PC-9 (cell line): ENCODE measurements at regions of chr2 and their contacts with region 1.

Region 1: GRCh38 chr2:110101280-110101844 is 14.3 kb downstream of the MALL start:
- DNase-seq: peak; percentile 98 to 99
- H3K4me3 ChIP-seq: peak overlapping the region; percentile 25; the same call in 1 of the 2 replicates
- H3K27ac ChIP-seq: peak overlapping the region; percentile 100
- H3K4me1 ChIP-seq: peaks cover 92% of the 10 kb centered on the region
- H3K27me3 ChIP-seq: no peaks in the 10 kb centered on the region
- CTCF ChIP-seq: no peak

Region 2: GRCh38 chr2:110113961-110114591 is 12.7 kb after region 1 on chr2:
- CTCF ChIA-PET with region 1: interaction called, 6 read pairs
- POLR2A ChIA-PET with region 1: interaction called, 10 read pairs
- intact Hi-C with region 1: loop called (anchors 1 kb)
- DNase-seq: peak; percentile 70 to 83
- H3K4me3 ChIP-seq: peak overlapping the region; percentile 70
- H3K27ac ChIP-seq: peak overlapping the region; percentile 80
- H3K4me1 ChIP-seq: peaks cover 51% of the 10 kb centered on the region
- H3K27me3 ChIP-seq: no peaks in the 10 kb centered on the region
- CTCF ChIP-seq: peak; percentile 51; the same call in 1 of the 2 replicates

Region 3: GRCh38 chr2:110149330-110150220 is 48.2 kb after region 1 on chr2:
- CTCF ChIA-PET with region 1: no interaction called
- POLR2A ChIA-PET with region 1: no interaction called
- intact Hi-C with region 1: loop called (anchors 1 kb)
- DNase-seq: peak; percentile 34 to 92
- H3K4me3 ChIP-seq: peak overlapping the region; percentile 14; the same call in 1 of the 2 replicates
- H3K27ac ChIP-seq: peak overlapping the region; percentile 95
- H3K4me1 ChIP-seq: peaks cover 24% of the 10 kb centered on the region
- H3K27me3 ChIP-seq: no peaks in the 10 kb centered on the region
- CTCF ChIP-seq: no peak

Region 4: DNA sequence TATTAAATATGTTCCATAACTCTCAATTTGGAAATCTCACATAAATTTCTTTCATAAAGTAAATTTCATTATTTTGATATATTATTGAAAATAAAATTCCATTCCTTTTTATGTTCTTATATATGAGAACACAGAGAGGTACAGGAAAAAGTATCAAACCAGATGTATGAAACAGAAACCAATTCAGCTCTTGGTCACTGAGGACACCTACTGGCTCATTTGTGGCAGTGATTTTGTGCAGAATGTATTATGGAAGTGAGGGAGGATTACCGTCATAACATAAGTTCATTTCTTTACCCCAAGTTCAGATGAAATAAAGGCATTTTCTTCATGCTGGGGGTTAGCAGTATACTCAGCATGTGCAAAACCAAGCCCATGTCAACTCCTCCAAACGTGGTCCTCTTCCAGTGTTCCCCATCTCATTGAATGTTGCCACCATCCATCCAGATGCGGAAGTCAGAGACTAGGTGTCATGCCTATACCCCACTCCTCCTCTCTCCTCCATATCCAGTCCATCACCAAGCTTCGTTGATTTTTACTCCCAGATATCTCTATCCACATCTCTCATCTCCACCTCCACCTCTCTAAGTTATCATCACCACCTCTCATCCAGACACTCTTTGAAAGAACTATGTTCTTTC is 55.9 kb after region 1 on chr2:
- CTCF ChIA-PET with region 1: interaction called, 7 read pairs
- POLR2A ChIA-PET with region 1: no interaction called
- intact Hi-C with region 1: loop called (anchors 2 kb)
- DNase-seq: peak; percentile 31 to 58
- H3K4me3 ChIP-seq: no peak overlapping the region
- H3K27ac ChIP-seq: peak overlapping the region; percentile 65
- H3K4me1 ChIP-seq: peaks cover 10% of the 10 kb centered on the region
- H3K27me3 ChIP-seq: no peaks in the 10 kb centered on the region
- CTCF ChIP-seq: peak; percentile 88

Region 5: DNA sequence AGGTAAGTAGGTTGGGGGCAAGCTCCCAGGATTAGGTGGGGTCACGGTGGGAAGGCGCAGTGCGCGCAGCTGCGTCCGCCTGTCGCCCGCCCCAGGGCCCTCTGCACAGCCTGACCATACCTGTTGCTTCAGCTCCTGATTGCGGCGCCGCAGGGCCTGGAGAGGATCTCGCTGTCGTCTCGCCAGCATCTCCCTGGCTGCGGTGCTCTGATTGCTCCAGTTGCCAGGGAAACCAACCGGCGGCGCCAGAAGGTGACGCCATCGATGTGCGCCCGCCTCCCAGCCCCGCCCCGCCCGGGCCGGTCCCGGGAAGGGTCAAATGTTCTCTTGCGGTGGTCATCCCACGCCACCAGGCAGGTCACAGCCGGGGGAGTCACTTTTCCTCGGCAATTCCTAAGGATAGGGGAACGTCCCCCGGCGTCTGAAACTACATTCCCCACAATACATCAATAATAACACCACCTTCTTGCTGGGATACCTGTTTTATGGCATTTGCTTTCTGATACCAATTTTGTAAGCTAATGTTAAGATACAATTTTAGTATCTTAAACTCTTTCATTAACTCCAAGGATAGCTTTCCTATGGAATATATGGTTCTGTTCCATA is 103.5 kb after region 1 on chr2 and contains the start of gene NPHP1:
- CTCF ChIA-PET with region 1: no interaction called
- POLR2A ChIA-PET with region 1: no interaction called
- intact Hi-C with region 1: no loop called
- DNase-seq: peak; percentile 79 to 85
- H3K4me3 ChIP-seq: peak within 1 kb of the TSS; percentile 72
- H3K27ac ChIP-seq: peak within 1 kb of the TSS; percentile 20; the same call in 1 of the 2 replicates
- H3K4me1 ChIP-seq: peaks cover 6% of the 10 kb centered on the region; the same call in 1 of the 2 replicates
- H3K27me3 ChIP-seq: no peaks in the 10 kb centered on the region
- CTCF ChIP-seq: no peak
- total RNA-seq, gene NPHP1: 12.2 and 13.7 TPM in 2 replicates